Psoas muscle (tissue), 8 donors: ENCODE measurements at regions of chr9 and their contacts with region 1.

Region 1: DNA sequence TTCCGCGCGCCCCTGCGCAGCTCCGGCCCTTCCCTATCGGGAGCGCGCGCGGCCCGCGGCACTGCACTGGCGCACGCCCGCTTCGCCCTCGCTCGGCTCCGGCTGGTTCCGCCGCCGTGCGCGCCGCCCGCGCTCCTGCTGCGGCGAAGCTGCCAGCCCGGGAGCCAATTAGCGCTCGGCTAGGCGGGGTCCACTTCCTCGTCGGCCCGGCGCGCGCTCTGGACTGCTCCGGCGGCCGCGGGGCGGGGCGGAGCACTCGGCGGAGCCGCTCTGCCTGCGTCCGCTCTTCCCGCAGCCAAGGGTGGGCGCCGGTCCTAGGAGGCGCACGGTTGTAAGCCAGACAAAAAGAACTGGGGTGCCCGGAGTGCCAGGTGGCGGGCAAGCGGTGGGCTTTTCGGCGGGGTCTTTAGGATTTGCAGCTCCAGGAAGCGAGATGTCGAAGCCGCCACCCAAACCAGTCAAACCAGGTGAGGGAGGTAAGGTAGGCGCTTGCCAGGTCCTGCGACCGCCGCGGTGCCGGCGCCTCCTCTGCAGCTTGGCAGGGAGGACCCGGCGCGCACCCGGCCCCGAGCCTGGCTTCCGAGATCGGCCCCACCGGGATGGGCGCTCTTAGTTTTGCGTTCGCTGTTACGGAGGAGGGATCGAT is at the start of gene OSTF1:
- DNase-seq: peak; percentile 97 to 98
- ATAC-seq: peak; percentile 92 to 96 (median 94)
- H3K4me3 ChIP-seq: peak within 1 kb of the TSS; percentile 90
- H3K27ac ChIP-seq: peak within 1 kb of the TSS; percentile 96
- H3K4me1 ChIP-seq: peaks cover 25% of the 10 kb centered on the region
- H3K27me3 ChIP-seq: no peaks in the 10 kb centered on the region
- CTCF ChIP-seq: no peak
- total RNA-seq, gene OSTF1: 7.1 to 11.0 (median 9.7) TPM

Region 2: DNA sequence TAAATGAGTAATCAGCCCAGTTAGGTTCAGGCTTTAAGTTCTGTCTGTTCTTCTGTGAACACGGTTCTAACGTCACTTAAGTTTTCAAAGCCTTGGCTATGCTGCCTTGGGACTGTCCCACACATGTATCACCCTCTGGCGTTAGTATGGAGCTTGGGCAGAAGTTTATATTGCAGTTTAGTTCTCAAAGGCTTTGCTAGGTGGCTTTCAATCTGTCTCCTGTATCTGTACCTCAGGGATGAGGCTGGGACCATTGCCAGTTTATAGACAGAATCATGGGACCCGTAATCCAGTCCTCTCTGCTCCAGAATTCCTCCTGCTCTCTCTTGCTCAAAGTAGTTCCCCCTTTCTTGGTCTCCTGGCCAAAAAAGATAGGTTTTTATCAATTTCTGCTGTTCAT is 147.8 kb before region 1 on chr9:
- intact Hi-C with region 1: no loop called
- DNase-seq: no peak
- ATAC-seq: no peak
- H3K4me3 ChIP-seq: no peak overlapping the region
- H3K27ac ChIP-seq: no peak overlapping the region
- H3K4me1 ChIP-seq: no peaks in the 10 kb centered on the region
- H3K27me3 ChIP-seq: no peaks in the 10 kb centered on the region
- CTCF ChIP-seq: no peak

Region 3: GRCh38 chr9:75027187-75028107 is 60.9 kb before region 1 on chr9:
- intact Hi-C with region 1: loop called (anchors 1 to 5 kb)
- DNase-seq: peak; percentile 77 to 83
- ATAC-seq: peak; percentile 77 to 79 (median 79)
- H3K4me3 ChIP-seq: peak overlapping the region; percentile 98
- H3K27ac ChIP-seq: peak overlapping the region; percentile 97
- H3K4me1 ChIP-seq: peaks cover 19% of the 10 kb centered on the region
- H3K27me3 ChIP-seq: no peaks in the 10 kb centered on the region
- CTCF ChIP-seq: no peak

Region 4: GRCh38 chr9:75053869-75054268 is 34.5 kb before region 1 on chr9:
- intact Hi-C with region 1: no loop called
- DNase-seq: no peak
- ATAC-seq: no peak
- H3K4me3 ChIP-seq: no peak overlapping the region
- H3K27ac ChIP-seq: no peak overlapping the region
- H3K4me1 ChIP-seq: no peaks in the 10 kb centered on the region
- H3K27me3 ChIP-seq: no peaks in the 10 kb centered on the region
- CTCF ChIP-seq: no peak

Region 5: DNA sequence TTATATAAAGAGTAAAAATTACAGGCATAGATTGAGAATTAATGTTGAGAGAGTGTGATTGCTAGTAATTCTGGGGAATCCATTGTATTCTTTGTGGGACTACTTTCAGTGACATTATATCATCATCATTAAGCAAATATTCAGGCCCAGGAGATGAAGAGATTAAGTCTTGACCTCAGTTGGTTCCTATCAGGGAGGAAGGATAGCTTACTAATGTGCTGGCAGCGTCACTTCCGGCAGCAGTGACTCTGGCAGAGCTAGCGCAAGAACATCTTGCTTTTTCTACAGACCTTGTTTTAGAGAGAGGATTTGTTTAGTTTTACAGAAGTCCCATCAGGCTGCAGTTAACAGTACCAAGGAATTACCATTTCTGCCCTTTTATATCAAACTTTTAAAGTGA is 20.2 kb after region 1 on chr9:
- intact Hi-C with region 1: loop called in 1 of 2 experiments (anchors 2 kb)
- DNase-seq: peak in 1 of 2 donors; percentile 71
- ATAC-seq: peak in 2 of 4 donors; percentile 46 to 67
- H3K4me3 ChIP-seq: no peak overlapping the region
- H3K27ac ChIP-seq: no peak overlapping the region
- H3K4me1 ChIP-seq: peaks cover 9% of the 10 kb centered on the region
- H3K27me3 ChIP-seq: no peaks in the 10 kb centered on the region
- CTCF ChIP-seq: no peak